Activated CD8-positive, alpha-beta T cell treated with anti-CD3 and anti-CD28 coated beads for 36 hours (primary cell): ENCODE measurements at regions of chr15 and their contacts with region 1.

Region 1: GRCh38 chr15:100873029-100873677 is 6.5 kb upstream of the ALDH1A3 start:
- DNase-seq: peak; percentile 63
- ATAC-seq: peak; percentile 74
- H3K4me3 Mint-ChIP-seq: no peak overlapping the region
- H3K27ac Mint-ChIP-seq: no peak overlapping the region
- H3K4me1 Mint-ChIP-seq: no peaks in the 10 kb centered on the region
- H3K27me3 Mint-ChIP-seq: peaks cover 23% of the 10 kb centered on the region
- CTCF ChIP-seq: peak; percentile 86

Region 2: GRCh38 chr15:100627789-100628395 is 245.3 kb before region 1 on chr15:
- CTCF ChIA-PET with region 1: interaction called, 14 read pairs
- POLR2A ChIA-PET with region 1: no interaction called
- intact Hi-C with region 1: loop called (anchors 2 kb)
- DNase-seq: peak; percentile 74
- ATAC-seq: peak; percentile 93
- H3K4me3 Mint-ChIP-seq: no peak overlapping the region
- H3K27ac Mint-ChIP-seq: no peak overlapping the region
- H3K4me1 Mint-ChIP-seq: peaks cover 9% of the 10 kb centered on the region
- H3K27me3 Mint-ChIP-seq: no peaks in the 10 kb centered on the region
- CTCF ChIP-seq: peak; percentile 81

Region 3: GRCh38 chr15:100821327-100821726 is 51.8 kb before region 1 on chr15:
- CTCF ChIA-PET with region 1: no interaction called
- POLR2A ChIA-PET with region 1: no interaction called
- intact Hi-C with region 1: loop called (anchors 5 kb)
- DNase-seq: peak; percentile 23
- ATAC-seq: peak; percentile 73
- H3K4me3 Mint-ChIP-seq: no peak overlapping the region
- H3K27ac Mint-ChIP-seq: no peak overlapping the region
- H3K4me1 Mint-ChIP-seq: peaks cover 5% of the 10 kb centered on the region
- H3K27me3 Mint-ChIP-seq: peaks cover 37% of the 10 kb centered on the region
- CTCF ChIP-seq: no peak

Region 4: DNA sequence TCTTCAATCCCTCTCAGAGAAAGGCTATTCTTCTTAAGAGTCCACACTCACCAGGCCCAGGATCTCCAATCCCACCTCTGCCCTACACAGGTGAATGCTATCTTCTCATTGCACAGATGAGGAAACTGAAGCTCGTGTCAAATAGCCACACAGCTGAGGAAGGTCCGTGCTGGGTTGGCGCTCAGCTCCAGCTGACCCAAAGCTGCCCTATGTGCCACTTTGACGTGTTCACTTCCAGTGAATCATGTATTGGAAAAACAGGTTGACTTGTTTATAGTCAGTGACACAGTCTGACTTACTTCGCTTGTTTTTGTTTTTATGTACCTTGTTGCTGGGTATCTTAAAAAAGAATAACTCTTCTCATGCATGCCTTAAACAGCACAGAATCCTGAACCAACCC is 26.0 kb before region 1 on chr15:
- CTCF ChIA-PET with region 1: interaction called, 11 read pairs
- POLR2A ChIA-PET with region 1: no interaction called
- intact Hi-C with region 1: no loop called
- DNase-seq: no peak
- ATAC-seq: no peak
- H3K4me3 Mint-ChIP-seq: no peak overlapping the region
- H3K27ac Mint-ChIP-seq: no peak overlapping the region
- H3K4me1 Mint-ChIP-seq: peaks cover 4% of the 10 kb centered on the region
- H3K27me3 Mint-ChIP-seq: peaks cover 9% of the 10 kb centered on the region
- CTCF ChIP-seq: no peak

Region 5: DNA sequence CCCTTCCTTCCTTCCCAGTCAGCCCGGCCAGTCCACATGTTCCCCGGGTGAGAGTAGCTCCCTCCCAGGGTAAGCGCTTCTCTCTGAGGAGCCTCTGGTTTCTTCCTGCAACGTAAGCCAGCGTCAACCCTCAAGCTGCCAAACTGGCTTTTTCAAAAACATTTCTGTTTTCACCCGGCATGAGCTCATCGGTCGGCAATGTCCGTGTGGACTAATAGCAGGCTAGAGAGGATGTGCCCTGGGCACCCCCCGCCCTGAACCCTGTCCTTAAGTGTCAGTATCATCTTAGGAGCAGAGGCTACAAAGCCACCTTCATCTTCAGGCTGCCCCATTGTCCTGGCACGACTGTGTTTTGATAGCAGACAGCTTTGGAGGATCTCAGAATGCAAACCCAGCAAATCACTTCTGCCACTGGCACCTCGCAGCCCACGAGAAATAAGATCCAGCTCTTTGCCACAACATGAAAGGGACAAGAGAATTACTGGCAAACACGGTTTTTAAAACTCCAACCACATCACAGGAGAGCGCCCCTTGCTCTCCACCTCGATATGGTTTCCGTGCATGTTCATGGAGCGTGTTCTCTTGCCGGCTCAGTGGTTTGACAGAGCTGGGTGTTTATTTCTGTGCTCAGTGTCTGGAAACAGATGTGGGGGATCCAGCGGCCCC is 16.4 kb after region 1 on chr15:
- CTCF ChIA-PET with region 1: interaction called, 13 read pairs
- POLR2A ChIA-PET with region 1: no interaction called
- intact Hi-C with region 1: no loop called
- DNase-seq: no peak
- ATAC-seq: no peak
- H3K4me3 Mint-ChIP-seq: no peak overlapping the region
- H3K27ac Mint-ChIP-seq: no peak overlapping the region
- H3K4me1 Mint-ChIP-seq: peaks cover 3% of the 10 kb centered on the region
- H3K27me3 Mint-ChIP-seq: peaks cover 40% of the 10 kb centered on the region
- CTCF ChIP-seq: no peak

Region 6: DNA sequence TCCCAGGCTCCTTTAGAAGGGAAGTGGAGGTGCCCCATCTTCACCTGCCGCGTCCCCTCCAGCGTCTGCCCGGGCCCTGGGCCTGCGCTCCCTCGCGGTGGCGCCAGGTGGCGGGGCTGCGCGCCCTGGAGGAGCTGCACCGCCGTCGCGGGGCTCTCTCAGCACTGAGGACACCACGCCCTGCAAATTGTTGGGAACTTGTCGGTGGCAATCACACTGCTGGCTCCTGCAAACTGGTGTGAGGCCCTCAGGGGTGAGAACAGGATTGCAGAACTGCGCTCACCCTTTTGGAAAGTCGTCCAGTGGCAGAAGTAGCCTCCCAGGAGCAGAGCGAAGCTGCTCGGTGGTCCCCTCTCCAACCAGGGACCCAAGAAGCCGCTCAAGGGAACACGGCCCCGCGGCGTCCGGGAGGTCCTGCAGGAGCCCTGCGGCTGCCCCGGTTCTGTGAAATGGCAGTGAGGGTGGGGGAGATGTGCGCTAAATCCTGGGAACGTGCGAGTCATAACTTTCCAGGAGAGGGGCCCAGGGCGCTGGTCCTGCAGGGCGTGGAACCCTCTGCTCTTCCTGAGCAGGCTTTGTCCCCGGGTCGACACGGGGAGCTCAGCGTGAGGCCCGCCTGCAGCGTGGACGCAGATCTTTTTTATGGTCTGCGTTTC is 45.0 kb after region 1 on chr15:
- CTCF ChIA-PET with region 1: interaction called, 18 read pairs
- POLR2A ChIA-PET with region 1: no interaction called
- intact Hi-C with region 1: no loop called
- DNase-seq: peak; percentile 78
- ATAC-seq: peak; percentile 97
- H3K4me3 Mint-ChIP-seq: peak overlapping the region; percentile 64
- H3K27ac Mint-ChIP-seq: no peak overlapping the region
- H3K4me1 Mint-ChIP-seq: peaks cover 15% of the 10 kb centered on the region
- H3K27me3 Mint-ChIP-seq: peaks cover 66% of the 10 kb centered on the region
- CTCF ChIP-seq: peak; percentile 92

Region 7: GRCh38 chr15:100940767-100941379 is 67.7 kb after region 1 on chr15:
- CTCF ChIA-PET with region 1: no interaction called
- POLR2A ChIA-PET with region 1: no interaction called
- intact Hi-C with region 1: no loop called
- DNase-seq: no peak
- ATAC-seq: no peak
- H3K4me3 Mint-ChIP-seq: no peak overlapping the region
- H3K27ac Mint-ChIP-seq: no peak overlapping the region
- H3K4me1 Mint-ChIP-seq: no peaks in the 10 kb centered on the region
- H3K27me3 Mint-ChIP-seq: no peaks in the 10 kb centered on the region
- CTCF ChIP-seq: no peak